CD4-positive, alpha-beta T cell (primary cell): ENCODE measurements at regions of chr11 and their contacts with region 1.

Region 1: DNA sequence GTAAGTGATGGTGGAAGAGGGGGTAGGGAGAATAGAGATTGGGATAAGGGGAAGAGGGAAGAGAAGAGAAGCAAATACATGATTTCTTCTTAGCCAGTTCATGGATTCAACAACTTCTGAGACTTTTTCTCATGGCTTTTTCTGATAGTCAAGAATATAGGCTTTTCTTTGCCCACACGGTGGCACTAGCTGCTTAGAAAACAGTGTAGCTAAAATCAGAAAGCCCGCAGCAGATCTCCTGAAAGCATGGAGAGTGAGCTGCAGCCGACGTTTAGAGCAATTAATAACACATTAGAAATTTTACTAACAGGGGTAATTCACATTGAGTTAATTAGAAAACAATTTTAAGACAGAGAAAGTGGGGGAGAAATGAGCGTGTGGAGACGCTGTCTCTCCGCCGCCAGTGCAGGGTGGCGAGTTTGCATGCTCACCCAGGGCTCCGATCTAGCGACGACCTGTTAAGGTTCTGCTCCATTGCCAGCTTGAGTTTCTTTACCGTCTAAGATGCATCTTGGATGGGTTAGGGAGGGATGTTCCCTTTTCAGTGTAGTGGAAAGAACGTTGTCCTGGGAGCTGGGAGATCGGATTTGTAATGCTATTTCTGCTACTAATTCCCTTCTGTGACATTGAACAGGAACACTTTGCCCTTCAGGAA is 3.3 kb upstream of the RAG1 start:
- DNase-seq: peak in 12 of 14 experiments; percentile 3 to 69 (median 22)
- ATAC-seq: peak; percentile 34
- H3K4me3 ChIP-seq: peak overlapping the region; percentile 32
- H3K4me3 Mint-ChIP-seq: peak overlapping the region; percentile 76
- H3K27ac ChIP-seq: no peak overlapping the region
- H3K27ac Mint-ChIP-seq: no peak overlapping the region
- H3K4me1 ChIP-seq: peaks cover 10% of the 10 kb centered on the region
- H3K4me1 Mint-ChIP-seq: no peaks in the 10 kb centered on the region
- H3K27me3 ChIP-seq: peaks cover 9 to 11% of the 10 kb centered on the region in 2 experiments
- H3K27me3 Mint-ChIP-seq: peaks cover 42% of the 10 kb centered on the region
- CTCF ChIP-seq: peak; percentile 72

Region 2: DNA sequence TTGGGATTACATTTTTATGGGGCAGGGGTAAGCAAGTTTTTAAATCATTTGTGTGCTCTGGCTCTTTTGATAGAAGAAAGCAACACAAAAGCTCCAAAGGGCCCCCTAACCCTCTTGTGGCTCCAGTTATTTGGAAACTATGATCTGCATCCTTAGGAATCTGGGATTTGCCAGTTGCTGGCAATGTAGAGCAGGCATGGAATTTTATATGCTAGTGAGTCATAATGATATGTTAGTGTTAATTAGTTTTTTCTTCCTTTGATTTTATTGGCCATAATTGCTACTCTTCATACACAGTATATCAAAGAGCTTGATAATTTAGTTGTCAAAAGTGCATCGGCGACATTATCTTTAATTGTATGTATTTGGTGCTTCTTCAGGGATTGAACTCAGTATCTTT is 13.4 kb after region 1 on chr11:
- CTCF ChIA-PET with region 1: no interaction called
- POLR2A ChIA-PET with region 1: no interaction called
- intact Hi-C with region 1: no loop called
- DNase-seq: no peak
- ATAC-seq: no peak
- H3K4me3 ChIP-seq: no peak overlapping the region
- H3K4me3 Mint-ChIP-seq: no peak overlapping the region
- H3K27ac ChIP-seq: no peak overlapping the region
- H3K27ac Mint-ChIP-seq: no peak overlapping the region
- H3K4me1 ChIP-seq: no peaks in the 10 kb centered on the region
- H3K4me1 Mint-ChIP-seq: no peaks in the 10 kb centered on the region
- H3K27me3 ChIP-seq: peaks cover 0 to under 1% of the 10 kb centered on the region in 2 experiments
- H3K27me3 Mint-ChIP-seq: peaks cover 26% of the 10 kb centered on the region
- CTCF ChIP-seq: no peak

Region 3: GRCh38 chr11:36672813-36673450 is 108.4 kb after region 1 on chr11:
- CTCF ChIA-PET with region 1: no interaction called
- POLR2A ChIA-PET with region 1: no interaction called
- intact Hi-C with region 1: loop called in 1 of 2 experiments (anchors 5 kb)
- DNase-seq: peak in 5 of 14 experiments; percentile 2 to 64 (median 47)
- ATAC-seq: no peak
- H3K4me3 ChIP-seq: no peak overlapping the region
- H3K4me3 Mint-ChIP-seq: no peak overlapping the region
- H3K27ac ChIP-seq: no peak overlapping the region
- H3K27ac Mint-ChIP-seq: no peak overlapping the region
- H3K4me1 ChIP-seq: no peaks in the 10 kb centered on the region
- H3K4me1 Mint-ChIP-seq: no peaks in the 10 kb centered on the region
- H3K27me3 ChIP-seq: peaks cover 0 to 8% of the 10 kb centered on the region in 2 experiments
- H3K27me3 Mint-ChIP-seq: peaks cover 38% of the 10 kb centered on the region
- CTCF ChIP-seq: peak; percentile 97

Region 4: DNA sequence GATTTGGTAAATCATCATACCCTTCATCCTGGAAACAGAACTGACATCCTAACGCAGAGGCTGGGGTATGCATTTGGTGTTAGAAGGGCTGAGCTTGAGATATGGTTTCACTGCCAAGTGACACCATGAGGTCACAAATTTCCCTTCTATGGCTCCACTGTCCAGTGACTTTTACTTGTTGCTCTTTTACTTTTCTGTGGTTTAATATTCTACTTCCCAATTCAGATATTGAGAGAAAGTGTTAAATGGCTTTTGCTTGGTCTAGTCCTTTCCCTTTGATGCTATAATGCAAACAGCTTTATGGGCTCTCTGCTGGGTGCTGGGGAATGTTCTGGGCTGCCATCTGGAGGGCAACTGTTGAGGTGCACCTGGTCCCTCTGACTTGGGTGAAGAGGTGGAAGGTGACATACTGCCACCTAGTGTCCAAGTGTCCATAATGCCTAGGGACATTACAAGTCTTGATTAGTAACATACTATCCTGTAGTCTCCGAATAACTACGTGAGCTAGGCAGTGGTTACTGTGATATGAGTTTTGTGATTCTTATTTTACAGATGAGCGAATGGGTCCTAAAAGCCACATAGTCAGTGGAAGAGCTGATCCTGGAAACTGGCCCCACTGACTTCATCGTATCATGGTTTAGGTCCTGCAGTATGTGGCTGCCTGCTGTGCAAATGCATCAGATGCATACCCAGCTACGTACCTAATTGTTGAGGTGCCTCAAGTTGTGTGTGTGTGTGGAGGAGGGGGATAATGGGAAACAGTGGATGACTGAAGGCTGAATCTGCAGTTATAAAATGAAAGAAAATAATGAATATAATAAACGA is 182.6 kb after region 1 on chr11:
- CTCF ChIA-PET with region 1: interaction called, 14 read pairs
- POLR2A ChIA-PET with region 1: no interaction called
- intact Hi-C with region 1: loop called (anchors 2 kb)
- DNase-seq: peak; percentile 53 to 91 (median 70)
- ATAC-seq: peak; percentile 100
- H3K4me3 ChIP-seq: no peak overlapping the region
- H3K4me3 Mint-ChIP-seq: no peak overlapping the region
- H3K27ac ChIP-seq: no peak overlapping the region
- H3K27ac Mint-ChIP-seq: no peak overlapping the region
- H3K4me1 ChIP-seq: no peaks in the 10 kb centered on the region
- H3K4me1 Mint-ChIP-seq: peaks cover 5% of the 10 kb centered on the region
- H3K27me3 ChIP-seq: peaks cover 3 to 5% of the 10 kb centered on the region in 2 experiments
- H3K27me3 Mint-ChIP-seq: peaks cover 38% of the 10 kb centered on the region
- CTCF ChIP-seq: peak; percentile 96